Heart right ventricle (tissue), 16 donors: ENCODE measurements at regions of chr17 and their contacts with region 1.

Region 1: GRCh38 chr17:17959520-17960361 is 12.5 kb downstream of the TOM1L2 start:
- DNase-seq: no peak
- ATAC-seq: peak in 6 of 8 donors; percentile 14 to 48 (median 43)
- H3K4me3 ChIP-seq: peak overlapping the region in 6 of 10 donors; percentile 13 to 34 (median 20)
- H3K27ac ChIP-seq: peak overlapping the region in 9 of 10 donors; percentile 39 to 86 (median 62)
- H3K4me1 ChIP-seq: peaks cover 21 to 71% (median 58%) of the 10 kb centered on the region in 9 donors
- H3K27me3 ChIP-seq: no peaks in the 10 kb centered on the region
- CTCF ChIP-seq: no peak

Region 2: GRCh38 chr17:17890773-17891759 is 68.7 kb before region 1 on chr17:
- intact Hi-C with region 1: loop called in 2 of 10 experiments (anchors 10 kb)
- DNase-seq: peak; percentile 38 to 42
- ATAC-seq: peak; percentile 49 to 76 (median 66)
- H3K4me3 ChIP-seq: no peak overlapping the region
- H3K27ac ChIP-seq: peak overlapping the region in 1 of 10 donors; percentile 12
- H3K4me1 ChIP-seq: peaks cover 4 to 43% (median 27%) of the 10 kb centered on the region in 9 donors
- H3K27me3 ChIP-seq: no peaks in the 10 kb centered on the region
- CTCF ChIP-seq: peak; percentile 36 to 75 (median 66)